AG04450 (cell line): ENCODE measurements at regions of chr12 and their contacts with region 1.

Region 1: DNA sequence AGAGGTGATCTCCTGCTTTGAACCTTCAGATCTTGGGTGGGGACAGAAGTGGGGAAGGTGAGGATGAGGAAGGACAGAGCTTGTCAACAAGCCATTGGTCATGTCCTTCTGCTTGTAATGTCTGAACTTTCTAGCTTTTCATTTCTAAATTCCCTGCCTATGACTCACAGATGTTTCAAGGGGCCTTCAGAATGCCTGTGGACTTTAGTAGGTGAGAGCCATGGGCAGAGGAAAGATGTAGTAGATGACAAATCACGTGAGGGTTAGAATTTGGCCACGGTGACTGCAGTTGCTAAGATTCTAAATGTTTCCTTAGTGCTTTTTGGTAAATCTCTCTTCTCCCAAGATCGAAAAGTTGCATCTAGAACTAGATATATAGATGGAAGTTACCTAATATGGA is 18.7 kb upstream of the CREBL2 start:
- DNase-seq: no peak
- H3K4me3 ChIP-seq: no peak overlapping the region
- H3K27ac ChIP-seq: no peak overlapping the region
- H3K27me3 ChIP-seq: peaks cover 5% of the 10 kb centered on the region
- CTCF ChIP-seq: no peak

Region 2: GRCh38 chr12:12606781-12607589 is 14.1 kb after region 1 on chr12:
- CTCF ChIA-PET with region 1: interaction called, 11 read pairs
- POLR2A ChIA-PET with region 1: interaction called, 5 read pairs
- DNase-seq: no peak
- H3K4me3 ChIP-seq: no peak overlapping the region
- H3K27ac ChIP-seq: no peak overlapping the region
- H3K27me3 ChIP-seq: no peaks in the 10 kb centered on the region
- CTCF ChIP-seq: no peak